ENCODE measurements at regions of chr3 and their contacts with region 1.

Region 1: GRCh38 chr3:122458992-122459391 is 43.1 kb upstream of the WDR5B start:
- DNase-seq: no peak
- ATAC-seq: no peak

Region 2: DNA sequence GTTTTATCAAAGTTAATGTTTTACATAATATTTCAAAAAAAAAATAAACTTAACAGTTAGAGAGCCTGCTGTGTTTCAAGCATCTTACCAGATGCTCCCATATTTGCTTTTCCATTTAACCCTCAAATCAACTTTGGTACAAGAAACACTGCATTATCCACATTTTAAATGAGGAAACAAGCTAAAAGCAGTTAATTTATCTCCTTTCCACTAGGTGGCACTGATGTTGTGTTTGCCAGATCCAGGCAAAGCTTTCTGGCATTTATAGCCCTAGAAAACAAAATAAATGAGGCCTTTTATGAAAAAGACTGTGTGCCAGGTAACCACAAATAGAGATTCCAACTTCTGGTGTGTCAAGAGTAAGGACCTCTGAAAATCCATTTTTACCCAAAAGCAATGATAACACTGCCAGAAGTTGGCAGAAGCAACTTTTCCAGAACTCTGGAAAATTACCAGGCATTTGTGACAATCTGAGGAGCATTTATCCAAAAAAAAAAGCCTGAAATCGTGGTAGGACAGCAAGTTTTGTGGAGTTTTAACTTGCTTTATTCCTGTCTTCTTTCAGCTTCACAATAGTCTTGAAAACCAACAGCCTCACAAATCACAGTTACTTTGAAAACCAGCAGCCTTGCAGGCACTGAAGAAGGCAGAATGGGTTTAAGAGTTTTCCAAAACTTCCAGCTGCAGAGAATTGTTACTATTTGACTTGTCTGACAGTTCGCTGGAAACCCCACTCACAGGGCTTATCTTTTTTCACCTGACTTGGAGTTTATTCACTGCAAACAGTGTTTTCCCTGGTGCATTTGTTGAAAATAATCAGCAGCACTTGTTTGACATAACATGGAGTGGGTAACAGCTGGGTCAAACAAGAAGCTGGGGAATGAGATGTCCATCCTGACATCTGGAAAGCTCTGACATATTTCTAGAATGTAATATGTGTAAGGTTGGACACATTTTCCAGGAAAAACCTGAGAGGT is 65.8 kb before region 1 on chr3:
- intact Hi-C with region 1: loop called (anchors 5 kb)
- DNase-seq: no peak
- ATAC-seq: no peak

Region 3: DNA sequence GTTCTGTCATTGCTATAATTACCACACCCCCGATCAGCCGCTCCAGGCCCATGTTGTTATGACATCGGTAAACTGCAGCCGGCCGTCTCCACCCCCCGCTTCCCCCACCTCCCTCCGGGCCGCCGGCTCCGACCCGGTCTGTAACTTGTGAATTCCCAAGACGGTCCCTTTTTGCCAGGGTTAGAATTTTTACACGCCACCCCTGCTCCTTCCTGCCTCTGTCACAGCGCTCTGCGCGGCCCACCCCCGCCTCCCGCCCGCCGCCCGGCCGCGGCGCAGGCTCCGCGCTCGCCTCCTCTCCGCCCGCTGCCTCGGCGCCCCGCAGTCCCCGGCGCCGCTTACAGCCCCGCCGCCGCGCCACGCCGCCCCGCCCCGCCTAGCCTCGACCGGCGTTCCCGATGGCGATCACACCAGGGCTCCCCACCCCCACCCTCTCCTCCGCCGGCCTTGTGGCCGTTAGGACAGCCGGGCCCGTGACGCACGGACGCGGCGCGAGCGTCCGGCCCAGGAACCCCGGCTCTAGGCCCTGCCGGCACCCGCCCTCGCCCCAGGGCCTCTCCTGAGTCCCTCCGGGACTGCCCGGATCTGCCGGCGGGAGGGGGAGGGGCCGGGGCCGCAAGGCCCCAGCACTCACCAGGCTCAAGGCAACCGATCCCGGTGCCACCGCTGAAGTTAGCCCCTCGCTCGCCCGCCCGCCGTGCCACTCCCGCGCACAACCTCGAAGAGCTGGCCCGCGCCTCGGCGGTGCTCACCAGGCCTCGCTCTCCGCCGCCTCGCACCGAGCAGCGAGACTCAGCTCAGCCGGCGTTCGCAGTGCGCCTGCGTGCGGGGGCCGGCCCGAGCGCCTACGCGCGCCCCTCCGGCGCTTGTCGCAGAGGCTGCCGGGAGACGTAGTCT is 55.4 kb after region 1 on chr3 and contains the start of gene KPNA1:
- intact Hi-C with region 1: loop called (anchors 5 kb)
- DNase-seq: peak; percentile 94
- ATAC-seq: peak; percentile 98
- total RNA-seq, gene KPNA1: 71.7 TPM

Region 4: GRCh38 chr3:122609798-122610559 is 151.0 kb after region 1 on chr3:
- intact Hi-C with region 1: no loop called
- DNase-seq: no peak
- ATAC-seq: no peak

Measured in Right ventricle myocardium inferior (tissue), 1 donor.